AG04449 (cell line): ENCODE measurements at regions of chr6 and their contacts with region 1.

Region 1: DNA sequence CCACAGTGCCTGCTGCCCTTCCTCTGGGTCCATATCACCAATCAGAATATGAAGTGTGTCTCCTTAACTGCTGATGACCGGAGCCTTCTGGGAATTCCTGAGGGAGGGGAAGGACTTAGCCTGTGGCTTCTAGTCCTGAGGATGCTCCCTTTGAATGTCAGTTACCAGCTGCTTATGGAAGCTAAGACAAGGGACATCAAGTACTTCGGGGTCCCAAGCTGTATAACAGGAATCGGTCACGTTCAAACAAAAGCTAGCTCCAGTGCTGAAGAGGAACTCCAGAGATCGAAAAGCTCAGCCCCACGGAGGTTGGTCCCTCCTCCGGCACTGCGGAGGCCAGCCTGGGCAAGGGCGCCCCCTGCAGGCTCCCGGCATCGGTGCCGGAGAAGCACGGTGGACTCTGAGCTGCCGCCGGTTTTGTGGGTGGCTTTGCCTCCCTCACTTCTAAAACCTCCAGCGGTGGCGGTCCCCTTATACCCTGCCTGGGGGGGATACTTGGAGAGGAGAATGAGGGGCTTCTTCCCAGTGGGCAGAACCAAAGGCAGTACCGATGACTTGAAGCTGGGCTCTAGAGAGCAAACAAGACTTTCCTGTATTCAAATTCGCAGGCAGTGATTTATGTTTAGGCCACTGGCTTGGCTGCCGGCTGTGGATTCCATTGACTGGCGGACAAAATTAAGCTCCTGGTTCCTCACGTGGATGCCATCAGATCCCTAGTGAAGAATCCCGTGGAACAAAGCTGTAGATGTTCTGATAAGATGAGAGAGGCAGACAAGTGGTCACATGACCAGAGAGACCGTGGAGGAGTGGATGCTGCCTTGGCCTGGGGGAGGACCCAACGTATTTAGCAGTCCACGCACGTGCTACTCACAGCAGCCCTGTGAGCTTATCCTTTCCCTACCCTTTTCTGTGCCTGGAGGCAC is 16.2 kb upstream of the UBR2 start:
- DNase-seq: no peak
- H3K4me3 ChIP-seq: peak overlapping the region; percentile 55
- CTCF ChIP-seq: peak; percentile 100

Region 2: GRCh38 chr6:42217519-42218367 is 329.9 kb before region 1 on chr6 and contains the start of gene MRPS10:
- CTCF ChIA-PET with region 1: interaction called, 84 read pairs
- POLR2A ChIA-PET with region 1: no interaction called
- DNase-seq: peak; percentile 70
- H3K4me3 ChIP-seq: peak within 1 kb of the TSS; percentile 83
- CTCF ChIP-seq: no peak

Region 3: DNA sequence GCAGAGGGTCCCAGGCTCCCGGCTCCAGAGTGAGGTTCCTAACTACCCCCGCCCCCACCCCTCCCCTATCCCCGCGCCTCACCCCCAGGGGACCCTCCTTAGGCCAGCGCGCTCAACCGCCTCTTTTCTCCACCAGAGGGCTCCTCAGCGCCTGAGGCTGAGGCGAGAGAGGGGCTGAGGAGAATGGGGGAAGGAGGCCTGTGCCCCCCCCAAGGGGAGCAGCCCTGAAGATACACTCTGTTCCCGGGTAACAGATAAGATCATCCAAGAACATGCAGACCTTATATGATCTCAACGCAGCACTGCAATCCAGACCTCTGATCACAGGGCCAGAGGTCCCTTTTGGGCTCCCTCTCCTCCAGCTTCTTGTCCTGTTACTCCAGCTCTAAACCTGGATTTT is 286.7 kb before region 1 on chr6:
- CTCF ChIA-PET with region 1: interaction called, 115 read pairs
- POLR2A ChIA-PET with region 1: interaction called, 5 read pairs
- DNase-seq: no peak
- H3K4me3 ChIP-seq: no peak overlapping the region
- CTCF ChIP-seq: peak; percentile 74

Region 4: DNA sequence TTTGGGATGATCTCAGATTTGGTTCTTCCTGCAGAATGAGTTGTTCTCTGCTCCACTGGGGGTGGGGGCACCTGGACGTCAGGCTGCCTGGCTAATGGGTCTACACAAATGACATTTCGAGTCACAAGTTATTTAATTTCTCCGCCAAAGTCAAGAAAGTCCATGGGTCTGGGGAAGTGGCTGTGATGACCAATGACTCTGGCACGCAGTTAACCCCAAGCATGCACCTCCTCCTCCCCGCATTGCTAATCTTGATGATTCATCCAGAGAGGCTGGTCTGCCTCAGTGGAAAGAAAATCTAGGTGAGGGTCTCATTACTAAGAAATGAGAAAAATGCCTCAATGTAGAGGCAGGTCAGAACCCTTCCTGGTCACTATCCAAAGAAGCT is 231.7 kb before region 1 on chr6:
- CTCF ChIA-PET with region 1: interaction called, 27 read pairs
- POLR2A ChIA-PET with region 1: no interaction called
- DNase-seq: peak; percentile 89
- H3K4me3 ChIP-seq: no peak overlapping the region
- CTCF ChIP-seq: no peak

Region 5: DNA sequence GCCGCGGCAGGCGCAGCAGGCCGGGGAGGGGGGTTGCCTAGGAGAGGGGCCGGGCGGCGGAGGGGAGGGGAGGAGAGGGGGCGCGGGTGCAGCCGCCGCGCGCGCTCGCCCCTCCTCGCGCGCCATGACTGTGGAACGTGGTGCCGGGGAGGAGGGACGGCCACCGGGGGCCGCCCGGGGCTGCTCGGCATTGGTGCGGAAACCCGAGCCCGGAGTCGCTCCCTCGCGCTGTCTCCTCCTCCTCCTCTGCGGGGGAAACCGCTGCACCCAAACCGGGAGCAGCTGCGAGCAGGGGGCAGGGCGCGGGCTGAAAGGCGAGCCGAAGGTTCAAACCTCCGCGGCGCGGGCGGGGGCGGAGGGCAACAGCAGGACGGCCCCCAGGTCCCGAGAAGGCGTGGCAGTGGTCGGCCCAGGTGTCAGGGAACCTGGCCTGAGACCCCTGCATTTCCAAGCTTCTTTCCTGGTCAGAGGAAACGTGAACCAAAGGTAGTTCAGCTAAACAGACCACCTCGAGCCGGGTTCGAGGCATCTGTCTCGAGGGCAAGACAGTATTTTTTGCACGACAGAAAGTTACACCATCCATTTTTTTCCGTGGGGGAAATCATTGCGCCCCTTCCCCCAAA is 94.5 kb before region 1 on chr6:
- CTCF ChIA-PET with region 1: interaction called, 25 read pairs
- POLR2A ChIA-PET with region 1: interaction called, 12 read pairs
- DNase-seq: no peak
- H3K4me3 ChIP-seq: peak overlapping the region; percentile 74
- CTCF ChIP-seq: peak; percentile 10

Region 6: GRCh38 chr6:42520786-42521607 is 26.7 kb before region 1 on chr6:
- CTCF ChIA-PET with region 1: interaction called, 15 read pairs
- POLR2A ChIA-PET with region 1: interaction called, 3 read pairs
- DNase-seq: peak; percentile 34
- H3K4me3 ChIP-seq: no peak overlapping the region
- CTCF ChIP-seq: no peak

Region 7: DNA sequence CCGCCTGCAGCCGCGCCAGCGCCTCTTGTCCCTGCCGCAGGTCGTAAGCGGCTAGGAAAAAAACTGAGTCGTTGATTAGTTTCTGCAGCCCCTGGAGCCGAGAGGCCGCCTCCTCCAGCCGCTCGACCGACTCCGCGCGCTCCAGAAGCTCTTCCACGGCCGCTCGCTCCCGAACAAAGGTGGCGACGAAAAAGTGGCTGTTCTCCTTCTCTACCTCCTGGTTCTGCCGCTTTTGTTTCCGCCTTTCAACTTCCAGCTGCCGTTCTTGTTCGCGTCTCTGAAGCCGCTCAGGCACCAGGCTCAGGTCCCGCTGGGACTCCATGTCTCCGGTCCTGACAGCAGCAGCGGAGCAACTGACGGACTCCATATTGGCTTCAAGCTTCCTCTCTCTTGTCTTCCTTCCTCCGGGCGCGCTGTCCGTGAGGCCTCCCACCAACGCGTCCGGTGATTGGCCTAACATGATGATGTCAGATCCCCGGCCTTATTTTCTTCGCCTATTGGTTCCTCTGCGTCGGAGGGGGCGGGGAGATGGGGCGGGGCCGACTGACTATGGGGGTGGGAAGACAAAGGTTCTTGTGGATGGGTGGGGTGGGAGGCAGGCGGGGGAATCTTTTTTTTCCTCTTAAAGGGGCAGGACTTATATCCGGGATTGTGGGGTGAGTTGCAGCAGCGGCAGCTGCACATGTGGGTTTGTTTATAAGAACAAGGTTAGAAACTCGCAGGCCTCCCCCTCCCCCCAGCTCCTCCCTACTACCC is 198.2 kb after region 1 on chr6 and contains the start of gene TBCC:
- CTCF ChIA-PET with region 1: no interaction called
- POLR2A ChIA-PET with region 1: no interaction called
- DNase-seq: peak; percentile 95
- H3K4me3 ChIP-seq: peak within 1 kb of the TSS; percentile 99
- CTCF ChIP-seq: no peak